ENCODE measurements at regions of chr1 and their contacts with region 1.

Region 1: DNA sequence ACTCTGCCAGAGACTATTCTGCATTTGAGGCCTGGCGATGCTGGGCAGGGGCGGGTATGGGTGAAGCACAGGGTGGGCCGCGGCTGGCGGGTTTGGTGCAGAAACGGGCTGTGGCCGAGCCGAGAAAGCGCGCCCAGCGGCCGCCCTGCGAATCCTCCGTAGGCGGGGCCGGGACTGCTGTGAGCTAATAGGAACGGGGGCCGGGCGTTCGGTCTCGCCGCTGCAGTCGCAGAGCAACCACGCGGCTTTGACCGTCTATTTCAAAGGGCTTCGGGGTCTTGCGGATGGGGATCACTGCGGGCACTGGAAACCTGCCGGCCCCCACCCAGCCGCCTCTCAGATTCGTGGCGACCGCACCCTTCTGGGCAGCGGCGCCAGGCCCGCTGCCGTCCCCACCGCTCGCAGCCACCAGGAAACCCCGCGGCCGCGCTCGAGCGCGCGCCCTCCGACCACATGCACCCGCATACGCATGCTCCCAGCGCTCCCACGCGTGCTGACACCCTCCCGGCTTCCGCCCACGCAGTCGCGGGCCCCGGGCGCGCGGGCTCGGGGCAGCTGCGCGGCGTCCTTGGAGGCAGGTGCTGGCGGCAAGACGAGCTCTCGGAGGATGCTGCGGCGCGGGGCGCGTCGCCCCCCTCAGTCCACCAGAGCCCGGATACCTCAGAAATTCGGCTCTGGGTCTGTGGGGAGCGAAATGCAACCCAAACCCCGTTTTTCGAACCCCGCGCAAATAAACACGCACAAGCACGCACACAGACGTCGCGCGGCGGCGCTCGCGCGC is 32.6 kb downstream of the DNTTIP2 start:
- DNase-seq: peak; percentile 94
- ATAC-seq: peak; percentile 57
- H3K4me3 ChIP-seq: peak overlapping the region; percentile 45 to 90 (median 86)
- H3K4me3 Mint-ChIP-seq: peak overlapping the region; percentile 95
- H3K27ac ChIP-seq: peak overlapping the region; percentile 91 to 92
- H3K27ac Mint-ChIP-seq: peak overlapping the region; percentile 100
- H3K4me1 ChIP-seq: peaks cover 5 to 30% of the 10 kb centered on the region in 2 donors
- H3K4me1 Mint-ChIP-seq: peaks cover 24% of the 10 kb centered on the region
- H3K27me3 ChIP-seq: no peaks in the 10 kb centered on the region
- H3K27me3 Mint-ChIP-seq: peaks cover 4% of the 10 kb centered on the region
- CTCF ChIP-seq: no peak

Region 2: DNA sequence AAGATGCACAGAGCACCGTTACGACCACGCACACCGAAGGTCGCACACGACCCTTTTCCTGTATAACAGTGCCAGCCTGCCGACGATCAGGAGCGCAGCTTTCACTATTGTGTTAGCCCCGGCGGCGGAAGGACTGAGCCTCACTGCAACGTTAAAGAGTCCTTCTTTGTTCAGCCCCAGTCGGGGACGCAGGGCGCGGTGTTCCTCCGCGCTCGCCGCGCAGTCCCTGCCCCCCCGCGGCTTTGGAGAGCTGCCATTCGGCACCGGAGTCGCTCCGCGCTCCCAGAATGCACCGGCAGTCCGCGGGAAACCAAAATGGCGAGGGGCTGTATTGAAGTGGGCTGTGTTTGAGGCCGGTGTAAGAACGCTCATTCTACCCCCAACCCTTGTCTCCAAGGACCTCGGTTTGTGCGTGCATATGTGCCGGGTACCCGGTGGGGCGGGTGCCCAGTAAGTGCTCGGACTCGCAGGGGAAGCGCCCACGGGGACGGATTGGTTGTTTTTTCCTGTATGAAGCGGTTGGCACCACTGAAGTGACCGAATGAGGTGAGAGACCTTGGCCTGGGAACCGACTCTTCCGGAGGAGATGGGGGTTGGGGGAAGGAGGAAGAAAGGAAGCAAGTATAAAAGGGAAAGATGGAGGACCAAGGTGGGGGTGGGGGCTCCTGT is 767.3 kb before region 1 on chr1 and contains the start of gene MTF2:
- CTCF ChIA-PET with region 1: interaction called, 5 read pairs
- POLR2A ChIA-PET with region 1: interaction called, 5 read pairs
- intact Hi-C with region 1: loop called (anchors 2 kb)
- DNase-seq: peak; percentile 95
- ATAC-seq: peak; percentile 92
- H3K4me3 ChIP-seq: peak within 1 kb of the TSS; percentile 85 to 98 (median 89)
- H3K4me3 Mint-ChIP-seq: peak within 1 kb of the TSS; percentile 100
- H3K27ac ChIP-seq: peak within 1 kb of the TSS; percentile 80 to 87
- H3K27ac Mint-ChIP-seq: peak within 1 kb of the TSS; percentile 99
- H3K4me1 ChIP-seq: peaks cover 24 to 30% of the 10 kb centered on the region in 2 donors
- H3K4me1 Mint-ChIP-seq: peaks cover 46% of the 10 kb centered on the region
- H3K27me3 ChIP-seq: no peaks in the 10 kb centered on the region
- H3K27me3 Mint-ChIP-seq: no peaks in the 10 kb centered on the region
- CTCF ChIP-seq: no peak
- total RNA-seq, gene MTF2: 66.2 and 68.6 TPM in 2 replicates

Region 3: DNA sequence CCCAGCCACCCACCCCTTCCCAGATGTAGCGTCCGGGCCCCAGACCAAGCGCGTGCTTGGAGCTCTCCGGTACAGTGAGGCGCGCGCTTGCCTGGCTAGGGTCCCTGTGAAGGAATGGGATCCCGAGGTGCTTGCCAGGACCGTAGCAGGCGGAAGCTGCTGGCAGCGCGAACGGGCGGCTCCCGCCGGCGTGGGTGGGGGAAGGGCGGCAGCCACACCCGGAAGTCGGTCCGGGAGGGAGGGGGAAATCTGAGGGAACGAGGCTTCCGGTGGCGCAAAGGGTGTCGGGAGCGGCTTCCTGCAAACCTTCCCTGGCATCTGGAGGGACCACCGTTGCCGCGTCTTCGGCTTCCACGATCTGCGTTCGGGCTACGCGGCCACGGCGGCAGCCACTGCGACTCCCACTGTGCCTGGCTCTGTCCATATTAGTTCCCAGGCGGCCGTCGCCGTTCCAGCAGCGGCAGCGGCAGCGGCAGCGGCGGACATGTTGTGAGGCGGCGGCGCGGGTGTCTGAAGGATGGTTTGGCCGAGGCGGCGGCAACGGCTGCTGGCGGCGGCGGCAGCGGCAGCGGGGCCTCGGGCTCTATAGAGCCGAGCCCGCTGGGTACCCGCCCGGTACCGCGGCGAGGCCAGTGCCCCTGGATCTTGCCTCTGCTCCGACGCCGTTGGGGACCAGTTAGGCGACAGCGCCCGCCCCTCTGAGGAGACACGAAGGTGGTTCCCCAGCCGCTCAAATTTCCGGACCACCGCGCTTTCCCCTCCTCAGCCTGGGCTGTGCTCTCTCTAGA is 500.6 kb before region 1 on chr1 and contains the start of gene DR1:
- CTCF ChIA-PET with region 1: no interaction called
- POLR2A ChIA-PET with region 1: interaction called, 3 read pairs
- intact Hi-C with region 1: loop called (anchors 1 kb)
- DNase-seq: peak; percentile 93
- ATAC-seq: peak; percentile 84
- H3K4me3 ChIP-seq: peak within 1 kb of the TSS; percentile 78 to 94 (median 91)
- H3K4me3 Mint-ChIP-seq: peak within 1 kb of the TSS; percentile 95
- H3K27ac ChIP-seq: peak within 1 kb of the TSS; percentile 81 to 95
- H3K27ac Mint-ChIP-seq: peak within 1 kb of the TSS; percentile 98
- H3K4me1 ChIP-seq: peaks cover 12 to 40% of the 10 kb centered on the region in 2 donors
- H3K4me1 Mint-ChIP-seq: peaks cover 50% of the 10 kb centered on the region
- H3K27me3 ChIP-seq: no peaks in the 10 kb centered on the region
- H3K27me3 Mint-ChIP-seq: no peaks in the 10 kb centered on the region
- CTCF ChIP-seq: no peak
- total RNA-seq, gene DR1: 65.6 and 69.2 TPM in 2 replicates

Region 4: GRCh38 chr1:93680757-93681550 is 165.4 kb before region 1 on chr1:
- CTCF ChIA-PET with region 1: interaction called, 12 read pairs
- POLR2A ChIA-PET with region 1: no interaction called
- intact Hi-C with region 1: loop called (anchors 2 kb)
- DNase-seq: peak; percentile 86
- ATAC-seq: peak; percentile 78
- H3K4me3 ChIP-seq: peak overlapping the region; percentile 65 to 86 (median 76)
- H3K4me3 Mint-ChIP-seq: peak overlapping the region; percentile 100
- H3K27ac ChIP-seq: peak overlapping the region; percentile 12 to 25
- H3K27ac Mint-ChIP-seq: peak overlapping the region; percentile 98
- H3K4me1 ChIP-seq: peaks cover 23 to 34% of the 10 kb centered on the region in 2 donors
- H3K4me1 Mint-ChIP-seq: peaks cover 69% of the 10 kb centered on the region
- H3K27me3 ChIP-seq: no peaks in the 10 kb centered on the region
- H3K27me3 Mint-ChIP-seq: no peaks in the 10 kb centered on the region
- CTCF ChIP-seq: peak; percentile 46

Region 5: GRCh38 chr1:93749894-93750301 is 96.5 kb before region 1 on chr1:
- CTCF ChIA-PET with region 1: interaction called, 8 read pairs
- POLR2A ChIA-PET with region 1: no interaction called
- intact Hi-C with region 1: loop called (anchors 2 kb)
- DNase-seq: peak; percentile 82
- ATAC-seq: peak; percentile 48
- H3K4me3 ChIP-seq: peak overlapping the region in 2 of 5 experiments; percentile 5 to 40
- H3K4me3 Mint-ChIP-seq: peak overlapping the region; percentile 73
- H3K27ac ChIP-seq: peak overlapping the region; percentile 86 to 87
- H3K27ac Mint-ChIP-seq: peak overlapping the region; percentile 93
- H3K4me1 ChIP-seq: peaks cover 34 to 41% of the 10 kb centered on the region in 2 donors
- H3K4me1 Mint-ChIP-seq: peaks cover 55% of the 10 kb centered on the region
- H3K27me3 ChIP-seq: no peaks in the 10 kb centered on the region
- H3K27me3 Mint-ChIP-seq: no peaks in the 10 kb centered on the region
- CTCF ChIP-seq: peak; percentile 56

Region 6: DNA sequence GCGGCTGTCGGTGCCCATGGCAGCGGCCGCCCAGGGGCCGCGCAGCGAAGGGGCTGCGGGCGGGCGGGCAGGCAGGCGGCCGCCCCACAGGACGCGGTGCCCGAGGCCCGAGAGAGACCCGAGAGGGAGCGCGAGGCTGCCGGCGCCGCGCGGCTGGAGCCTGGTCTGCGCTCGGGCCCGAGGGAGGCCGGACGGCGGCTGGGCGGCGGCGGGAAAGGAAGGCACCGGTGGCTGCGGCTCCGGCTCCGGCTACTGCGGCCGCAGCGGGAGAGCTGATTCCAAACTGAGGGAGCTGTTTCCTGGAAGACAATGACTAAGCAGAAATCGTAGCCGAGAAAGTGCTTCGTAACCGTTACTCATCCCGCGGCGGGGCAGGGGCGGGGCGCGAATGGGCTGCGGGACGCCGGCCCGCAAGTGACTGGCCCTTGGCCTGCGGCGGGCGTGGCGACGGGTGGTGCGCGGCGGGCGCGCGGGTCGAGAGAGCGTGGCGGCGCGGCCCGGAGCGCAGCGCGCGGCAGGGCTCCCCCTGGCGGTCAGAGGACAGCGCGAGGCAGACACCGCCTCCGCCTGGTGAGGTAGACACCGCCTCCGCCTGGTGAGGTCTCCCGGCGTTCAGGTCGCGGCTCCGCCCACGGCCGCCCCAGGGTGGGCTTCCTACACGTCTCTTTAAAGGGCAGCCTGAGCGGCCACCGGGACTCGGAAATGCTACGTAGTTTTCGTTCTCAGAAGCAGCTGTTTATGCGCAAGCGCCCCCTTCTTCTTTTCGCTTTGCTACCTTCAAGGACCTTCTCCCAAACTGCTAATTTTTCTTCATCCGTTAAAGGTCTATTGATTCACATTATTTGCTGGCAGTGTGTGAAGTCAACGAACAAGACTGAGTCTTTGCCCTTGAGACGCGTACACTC is 63.0 kb after region 1 on chr1 and contains the start of gene GCLM:
- CTCF ChIA-PET with region 1: interaction called, 10 read pairs
- POLR2A ChIA-PET with region 1: no interaction called
- intact Hi-C with region 1: loop called (anchors 1 kb)
- DNase-seq: peak; percentile 94
- ATAC-seq: peak; percentile 93
- H3K4me3 ChIP-seq: peak within 1 kb of the TSS; percentile 60 to 98 (median 71)
- H3K4me3 Mint-ChIP-seq: peak within 1 kb of the TSS; percentile 89
- H3K27ac ChIP-seq: peak within 1 kb of the TSS; percentile 67 to 81
- H3K27ac Mint-ChIP-seq: peak within 1 kb of the TSS; percentile 84
- H3K4me1 ChIP-seq: peaks cover 17 to 21% of the 10 kb centered on the region in 2 donors
- H3K4me1 Mint-ChIP-seq: peaks cover 25% of the 10 kb centered on the region
- H3K27me3 ChIP-seq: no peaks in the 10 kb centered on the region
- H3K27me3 Mint-ChIP-seq: peaks cover 6% of the 10 kb centered on the region
- CTCF ChIP-seq: peak; percentile 94
- total RNA-seq, gene GCLM: 10.7 and 12.4 TPM in 2 replicates

Region 7: DNA sequence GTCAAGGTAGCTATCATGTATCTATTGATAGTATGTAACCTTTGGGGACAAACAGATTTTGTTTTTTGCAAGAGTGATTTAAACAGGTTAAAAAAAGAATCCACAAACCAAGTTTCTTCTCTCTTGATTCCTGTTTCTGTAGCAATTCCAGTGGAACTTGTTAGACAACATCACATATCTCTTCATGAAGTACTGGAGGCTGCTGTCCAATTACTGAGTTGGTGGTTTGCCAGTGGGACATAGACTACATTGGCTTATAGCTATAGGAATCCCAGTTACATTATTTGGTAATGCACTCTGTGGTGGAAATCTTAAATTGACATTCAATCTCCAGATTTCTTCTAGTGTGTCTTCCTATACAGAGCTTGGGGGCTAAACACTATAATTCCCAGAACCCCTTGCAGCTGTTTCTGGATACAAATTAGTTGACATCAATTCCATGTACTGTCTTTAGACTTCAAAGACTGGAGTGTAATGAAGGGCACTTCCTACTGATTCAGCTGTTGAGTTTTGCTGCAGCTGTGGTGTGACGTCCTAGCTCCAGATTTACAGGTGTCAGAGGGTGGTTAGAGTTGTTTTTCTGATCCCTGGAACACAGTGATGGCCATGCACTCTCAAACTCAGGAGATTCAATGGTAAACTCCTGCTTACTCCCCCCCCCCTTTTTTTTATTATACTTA is 92.2 kb after region 1 on chr1:
- CTCF ChIA-PET with region 1: no interaction called
- POLR2A ChIA-PET with region 1: no interaction called
- intact Hi-C with region 1: no loop called
- DNase-seq: no peak
- ATAC-seq: no peak
- H3K4me3 ChIP-seq: no peak overlapping the region
- H3K4me3 Mint-ChIP-seq: no peak overlapping the region
- H3K27ac ChIP-seq: no peak overlapping the region
- H3K27ac Mint-ChIP-seq: no peak overlapping the region
- H3K4me1 ChIP-seq: no peaks in the 10 kb centered on the region
- H3K4me1 Mint-ChIP-seq: no peaks in the 10 kb centered on the region
- H3K27me3 ChIP-seq: no peaks in the 10 kb centered on the region
- H3K27me3 Mint-ChIP-seq: no peaks in the 10 kb centered on the region
- CTCF ChIP-seq: no peak